ENCODE measurements at regions of chr6 and their contacts with region 1.

Region 1: GRCh38 chr6:10478187-10479040 is 42.7 kb upstream of the GCNT2 start:
- DNase-seq: peak in 3 of 5 donors; percentile 13 to 38 (median 29)
- H3K4me3 ChIP-seq: no peak overlapping the region
- H3K4me3 Mint-ChIP-seq: peak overlapping the region in 1 of 8 donors; percentile 16
- H3K27ac ChIP-seq: no peak overlapping the region
- H3K27ac Mint-ChIP-seq: no peak overlapping the region
- H3K4me1 ChIP-seq: no peaks in the 10 kb centered on the region
- H3K4me1 Mint-ChIP-seq: peaks cover 0 to 2% (median 0%) of the 10 kb centered on the region in 4 donors
- H3K27me3 ChIP-seq: no peaks in the 10 kb centered on the region
- H3K27me3 Mint-ChIP-seq: peaks cover 17 to 26% of the 10 kb centered on the region in 2 donors

Region 2: DNA sequence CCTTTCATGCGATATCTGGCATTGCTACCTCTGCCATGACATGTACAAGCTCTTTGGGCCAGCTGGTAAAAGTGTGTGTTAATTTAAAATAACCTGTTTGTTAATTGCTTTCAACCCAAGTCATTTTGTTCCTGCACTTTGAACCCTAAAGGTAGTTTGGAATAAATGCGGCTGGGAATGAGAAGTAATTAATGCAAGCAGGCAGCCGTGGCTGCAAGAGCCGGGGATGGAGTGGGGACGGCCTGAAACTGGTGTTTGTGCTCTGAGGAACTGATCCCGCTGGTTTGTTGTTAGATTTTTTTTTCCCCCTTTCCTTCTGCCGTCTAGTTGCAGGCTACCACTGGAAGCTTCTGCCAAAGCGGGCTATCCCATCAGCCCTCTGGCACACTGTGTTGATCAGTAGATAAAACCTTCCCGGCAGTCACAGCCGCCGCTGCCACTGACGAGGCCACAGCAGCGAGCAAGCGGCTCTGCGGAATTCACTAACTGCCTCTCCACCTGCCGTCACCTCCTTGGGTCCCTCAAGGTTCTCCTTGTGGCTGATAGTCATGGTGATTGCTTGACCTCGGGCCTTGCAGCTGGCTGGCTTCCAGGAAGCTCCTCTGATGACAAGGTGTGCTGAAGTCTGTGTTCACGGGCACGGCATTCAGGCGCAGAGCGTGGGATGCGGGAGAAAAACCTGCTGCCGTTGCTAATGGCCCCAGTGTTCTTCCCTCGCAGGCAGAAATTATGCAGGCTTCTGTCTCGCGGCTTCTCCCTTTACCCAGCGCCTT is 379.5 kb before region 1 on chr6:
- CTCF ChIA-PET with region 1: no interaction called
- POLR2A ChIA-PET with region 1: no interaction called
- intact Hi-C with region 1: no loop called
- DNase-seq: no peak
- H3K4me3 ChIP-seq: no peak overlapping the region
- H3K4me3 Mint-ChIP-seq: peak overlapping the region in 1 of 8 donors; percentile 31
- H3K27ac ChIP-seq: no peak overlapping the region
- H3K27ac Mint-ChIP-seq: no peak overlapping the region
- H3K4me1 ChIP-seq: no peaks in the 10 kb centered on the region
- H3K4me1 Mint-ChIP-seq: no peaks in the 10 kb centered on the region
- H3K27me3 ChIP-seq: no peaks in the 10 kb centered on the region
- H3K27me3 Mint-ChIP-seq: no peaks in the 10 kb centered on the region

Region 3: GRCh38 chr6:10465629-10466504 is 12.5 kb before region 1 on chr6:
- CTCF ChIA-PET with region 1: interaction called, 12 read pairs
- POLR2A ChIA-PET with region 1: no interaction called
- intact Hi-C with region 1: no loop called
- DNase-seq: no peak
- H3K4me3 ChIP-seq: no peak overlapping the region
- H3K4me3 Mint-ChIP-seq: no peak overlapping the region
- H3K27ac ChIP-seq: no peak overlapping the region
- H3K27ac Mint-ChIP-seq: peak overlapping the region in 1 of 7 donors; percentile 53
- H3K4me1 ChIP-seq: no peaks in the 10 kb centered on the region
- H3K4me1 Mint-ChIP-seq: no peaks in the 10 kb centered on the region
- H3K27me3 ChIP-seq: no peaks in the 10 kb centered on the region
- H3K27me3 Mint-ChIP-seq: peaks cover 12 to 25% of the 10 kb centered on the region in 2 donors

Region 4: GRCh38 chr6:10759312-10759839 is 281.0 kb after region 1 on chr6:
- CTCF ChIA-PET with region 1: no interaction called
- POLR2A ChIA-PET with region 1: no interaction called
- intact Hi-C with region 1: loop called (anchors 2 kb)
- DNase-seq: peak in 3 of 5 donors; percentile 13 to 23 (median 16)
- H3K4me3 ChIP-seq: no peak overlapping the region
- H3K4me3 Mint-ChIP-seq: no peak overlapping the region
- H3K27ac ChIP-seq: no peak overlapping the region
- H3K27ac Mint-ChIP-seq: peak overlapping the region in 1 of 7 donors; percentile 53
- H3K4me1 ChIP-seq: no peaks in the 10 kb centered on the region
- H3K4me1 Mint-ChIP-seq: peaks cover 10 to 26% (median 20%) of the 10 kb centered on the region in 4 donors
- H3K27me3 ChIP-seq: no peaks in the 10 kb centered on the region
- H3K27me3 Mint-ChIP-seq: no peaks in the 10 kb centered on the region

Region 5: DNA sequence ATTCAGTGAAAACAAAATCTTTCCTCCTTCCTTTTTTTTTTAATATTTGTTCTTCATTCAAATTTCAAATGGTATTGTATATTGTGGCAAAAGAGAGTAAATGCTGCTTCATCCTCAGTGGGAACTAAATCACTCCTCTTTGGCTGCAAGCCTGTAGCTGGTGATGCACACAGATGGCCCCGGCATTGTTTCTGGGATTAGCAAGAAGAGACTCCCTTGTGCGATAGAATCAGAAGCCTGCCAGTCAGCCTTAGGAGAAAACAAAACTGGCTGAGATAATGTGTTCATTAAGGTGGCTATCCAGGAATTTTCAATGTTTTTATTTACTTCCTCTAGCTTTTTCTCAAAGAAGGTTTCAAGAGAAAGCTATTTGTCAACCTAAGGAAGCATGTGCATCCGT is 586.4 kb after region 1 on chr6:
- CTCF ChIA-PET with region 1: interaction called, 18 read pairs
- POLR2A ChIA-PET with region 1: no interaction called
- intact Hi-C with region 1: loop called (anchors 1 kb)
- DNase-seq: no peak
- H3K4me3 ChIP-seq: no peak overlapping the region
- H3K4me3 Mint-ChIP-seq: no peak overlapping the region
- H3K27ac ChIP-seq: no peak overlapping the region
- H3K27ac Mint-ChIP-seq: no peak overlapping the region
- H3K4me1 ChIP-seq: no peaks in the 10 kb centered on the region
- H3K4me1 Mint-ChIP-seq: no peaks in the 10 kb centered on the region
- H3K27me3 ChIP-seq: no peaks in the 10 kb centered on the region
- H3K27me3 Mint-ChIP-seq: peaks cover 7% of the 10 kb centered on the region in 2 donors

Measured in CD4-positive, alpha-beta memory T cell (primary cell).